Mammary epithelial cell (primary cell): ENCODE measurements at regions of chr3 and their contacts with region 1.

Region 1: GRCh38 chr3:129224984-129225393 is 24.4 kb upstream of the COPG1 start:
- DNase-seq: peak; percentile 63
- H3K4me3 ChIP-seq: peak overlapping the region in 1 of 3 experiments; percentile 3
- H3K27ac ChIP-seq: no peak overlapping the region
- H3K4me1 ChIP-seq: peaks cover 41% of the 10 kb centered on the region
- H3K27me3 ChIP-seq: no peaks in the 10 kb centered on the region
- CTCF ChIP-seq: no peak

Region 2: GRCh38 chr3:129160891-129161859 is 63.8 kb before region 1 on chr3 and contains the start of gene ISY1:
- CTCF ChIA-PET with region 1: no interaction called
- dilution Hi-C with region 1: no loop called
- in situ Hi-C with region 1: no loop called
- intact Hi-C with region 1: loop called (anchors 1 kb)
- DNase-seq: peak; percentile 96
- H3K4me3 ChIP-seq: peak within 1 kb of the TSS; percentile 65 to 99 (median 96)
- H3K27ac ChIP-seq: peak within 1 kb of the TSS; percentile 90
- H3K4me1 ChIP-seq: peaks cover 19% of the 10 kb centered on the region
- H3K27me3 ChIP-seq: no peaks in the 10 kb centered on the region
- CTCF ChIP-seq: peak; percentile 85 to 96
- total RNA-seq, gene ISY1: 16.8 to 38.2 TPM

Region 3: GRCh38 chr3:129183569-129184395 is 41.2 kb before region 1 on chr3 and contains the start of gene CNBP:
- CTCF ChIA-PET with region 1: interaction called, 11 read pairs
- dilution Hi-C with region 1: no loop called
- in situ Hi-C with region 1: no loop called
- intact Hi-C with region 1: loop called (anchors 2 kb)
- DNase-seq: peak; percentile 94
- H3K4me3 ChIP-seq: peak within 1 kb of the TSS; percentile 73 to 95 (median 94)
- H3K27ac ChIP-seq: peak within 1 kb of the TSS; percentile 85
- H3K4me1 ChIP-seq: peaks cover 21% of the 10 kb centered on the region
- H3K27me3 ChIP-seq: no peaks in the 10 kb centered on the region
- CTCF ChIP-seq: no peak
- total RNA-seq, gene CNBP: 252 to 307 TPM

Region 4: DNA sequence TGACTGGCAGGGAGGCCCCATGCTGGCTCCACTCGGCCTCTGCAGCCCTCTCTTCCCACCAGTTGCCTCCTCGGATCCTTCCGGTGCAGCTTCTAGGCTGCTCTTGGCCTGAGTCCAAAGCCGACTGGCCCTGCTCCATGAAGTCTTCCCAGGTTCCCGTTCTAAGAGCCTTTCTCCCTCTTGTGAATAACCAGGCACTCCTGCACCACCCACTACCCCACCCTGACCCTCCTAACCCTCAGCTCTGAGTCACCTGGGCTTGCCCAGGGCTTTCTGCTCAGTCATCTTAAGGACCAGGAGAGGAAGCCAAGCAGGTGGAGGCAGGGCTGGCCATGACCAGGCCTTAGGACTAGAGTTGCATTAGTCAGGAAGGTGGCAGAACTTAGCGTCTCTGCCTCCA is 13.2 kb before region 1 on chr3:
- CTCF ChIA-PET with region 1: interaction called, 5 read pairs
- dilution Hi-C with region 1: no loop called
- in situ Hi-C with region 1: no loop called
- intact Hi-C with region 1: loop called (anchors 1 kb)
- DNase-seq: peak; percentile 99
- H3K4me3 ChIP-seq: no peak overlapping the region
- H3K27ac ChIP-seq: peak overlapping the region; percentile 4
- H3K4me1 ChIP-seq: peaks cover 17% of the 10 kb centered on the region
- H3K27me3 ChIP-seq: no peaks in the 10 kb centered on the region
- CTCF ChIP-seq: peak in 1 of 2 donors; percentile 4

Region 5: DNA sequence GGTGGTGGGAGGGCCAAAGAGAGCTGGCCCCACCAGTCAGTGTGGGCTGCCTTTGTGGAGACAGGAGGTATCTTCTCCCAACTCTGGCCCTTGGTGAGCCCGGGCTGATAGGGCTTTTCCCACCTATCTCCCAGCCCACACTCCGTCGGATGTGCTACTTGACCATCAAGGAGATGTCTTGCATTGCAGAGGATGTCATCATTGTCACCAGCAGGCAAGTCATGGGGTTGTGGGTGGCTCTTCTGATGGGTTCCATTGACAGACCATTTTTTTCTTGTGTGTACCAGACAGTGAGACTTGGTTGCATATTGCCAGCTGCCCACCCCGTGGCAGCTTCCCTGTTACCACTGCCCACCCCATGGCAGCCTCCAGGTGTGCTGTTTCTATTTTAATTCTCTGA is 27.8 kb after region 1 on chr3:
- CTCF ChIA-PET with region 1: no interaction called
- dilution Hi-C with region 1: no loop called
- in situ Hi-C with region 1: no loop called
- intact Hi-C with region 1: no loop called
- DNase-seq: no peak
- H3K4me3 ChIP-seq: no peak overlapping the region
- H3K27ac ChIP-seq: no peak overlapping the region
- H3K4me1 ChIP-seq: peaks cover 17% of the 10 kb centered on the region
- H3K27me3 ChIP-seq: no peaks in the 10 kb centered on the region
- CTCF ChIP-seq: no peak